Mammary epithelial cell (primary cell): ENCODE measurements at regions of chr6 and their contacts with region 1.

Region 1: DNA sequence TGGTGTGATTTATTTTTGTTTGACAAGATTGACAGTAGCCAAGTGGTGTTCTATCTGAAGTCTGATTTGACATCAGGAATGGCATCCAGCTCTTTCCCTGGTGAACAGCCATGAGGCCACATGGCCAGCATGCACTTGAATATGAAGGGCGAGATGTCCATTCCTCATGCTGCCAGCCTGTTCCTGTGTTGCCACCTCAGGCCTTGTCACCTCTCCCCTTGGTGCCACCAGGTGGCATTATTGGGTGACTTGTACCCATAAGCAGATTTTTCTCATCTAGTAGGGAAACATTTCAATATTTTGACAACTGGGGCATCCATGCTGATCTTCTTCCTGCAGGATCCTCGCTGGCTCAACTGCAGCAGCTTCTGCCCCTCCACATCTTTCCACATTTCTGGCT is 199.1 kb downstream of the ERMARD start:
- DNase-seq: peak; percentile 7
- H3K4me3 ChIP-seq: no peak overlapping the region
- H3K27ac ChIP-seq: no peak overlapping the region
- H3K4me1 ChIP-seq: no peaks in the 10 kb centered on the region
- H3K27me3 ChIP-seq: no peaks in the 10 kb centered on the region
- CTCF ChIP-seq: peak; percentile 31 to 58

Region 2: GRCh38 chr6:169880516-169880915 is 70.0 kb before region 1 on chr6:
- CTCF ChIA-PET with region 1: no interaction called
- dilution Hi-C with region 1: no loop called
- in situ Hi-C with region 1: no loop called
- intact Hi-C with region 1: no loop called
- DNase-seq: no peak
- H3K4me3 ChIP-seq: no peak overlapping the region
- H3K27ac ChIP-seq: no peak overlapping the region
- H3K4me1 ChIP-seq: no peaks in the 10 kb centered on the region
- H3K27me3 ChIP-seq: peaks cover 2% of the 10 kb centered on the region
- CTCF ChIP-seq: no peak

Region 3: DNA sequence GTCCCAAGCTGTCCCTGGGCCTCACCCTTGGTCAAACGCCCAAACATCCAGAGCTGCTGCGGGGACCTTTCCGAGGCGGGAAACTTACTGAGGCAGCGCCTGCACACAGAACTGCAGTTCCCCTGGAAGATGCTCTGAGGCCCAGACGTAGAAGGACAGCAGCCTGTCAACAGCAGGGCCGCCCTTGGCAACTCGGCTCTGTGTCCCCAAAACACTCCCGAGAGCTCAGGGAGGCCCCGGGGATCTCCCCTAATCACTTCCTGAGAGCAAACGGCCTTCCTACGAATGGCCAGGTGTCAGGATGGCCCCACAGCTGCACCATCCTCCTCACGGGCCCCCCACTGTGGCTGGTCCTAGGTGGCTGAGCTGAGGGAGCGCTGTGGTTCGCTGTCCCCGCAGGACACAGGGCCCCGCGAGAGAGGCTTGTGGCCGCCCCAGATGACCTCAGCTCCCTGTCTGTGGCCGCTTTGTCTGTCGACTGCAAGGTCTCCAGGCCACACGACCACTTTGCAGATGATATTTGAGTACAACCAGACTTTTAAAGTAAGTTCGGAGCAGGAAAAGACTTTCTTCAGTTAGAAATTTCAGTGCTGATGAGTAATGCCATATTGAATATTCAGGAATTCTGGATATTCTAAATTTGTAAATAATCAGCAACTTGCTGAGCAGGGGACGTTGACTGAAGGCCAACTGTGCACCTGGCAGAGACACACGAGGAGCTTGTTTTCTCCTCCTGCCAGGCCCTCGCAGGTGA is 294.3 kb after region 1 on chr6:
- CTCF ChIA-PET with region 1: no interaction called
- dilution Hi-C with region 1: no loop called
- in situ Hi-C with region 1: no loop called
- intact Hi-C with region 1: loop called (anchors 1 kb)
- DNase-seq: no peak
- H3K4me3 ChIP-seq: no peak overlapping the region
- H3K27ac ChIP-seq: no peak overlapping the region
- H3K4me1 ChIP-seq: no peaks in the 10 kb centered on the region
- H3K27me3 ChIP-seq: no peaks in the 10 kb centered on the region
- CTCF ChIP-seq: no peak

Region 4: DNA sequence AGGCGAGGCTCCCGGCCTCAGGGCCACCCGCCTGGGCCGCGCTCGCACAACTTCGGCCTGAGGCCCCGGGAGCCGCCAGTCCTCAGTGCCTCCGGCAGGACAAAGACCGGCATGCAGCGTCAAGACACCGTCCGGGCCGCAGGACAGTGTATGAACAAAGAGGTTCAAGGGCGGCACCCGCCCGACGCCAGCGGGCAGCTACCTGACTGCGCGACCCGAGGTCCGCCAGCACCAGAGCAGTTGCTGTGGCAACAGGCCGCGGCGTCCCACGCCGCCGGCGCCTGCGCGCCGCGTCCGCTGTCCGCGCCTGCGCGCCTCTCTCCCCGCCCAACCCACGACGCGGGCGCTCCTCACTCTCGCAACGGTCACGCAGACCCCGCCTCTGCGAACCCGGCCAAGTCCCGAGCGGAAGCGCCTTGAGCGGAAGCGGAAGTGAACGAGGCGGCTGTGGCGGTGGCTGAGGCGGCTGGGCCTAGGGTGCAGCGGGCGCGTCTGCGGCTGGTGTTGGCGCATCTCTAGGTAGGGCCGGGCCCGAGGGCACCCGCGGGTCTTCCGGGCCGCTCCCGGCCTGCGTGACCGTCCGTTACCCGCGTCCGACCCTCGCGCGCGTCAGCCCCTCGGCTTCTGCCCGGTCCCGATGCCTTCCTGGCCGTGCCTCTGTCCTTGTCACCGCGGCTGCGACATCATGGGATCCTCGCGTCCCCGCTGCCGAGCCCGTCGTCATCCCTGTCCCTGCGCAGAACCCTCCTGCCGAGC is 355.9 kb after region 1 on chr6 and contains the start of gene FAM120B:
- CTCF ChIA-PET with region 1: no interaction called
- dilution Hi-C with region 1: no loop called
- in situ Hi-C with region 1: no loop called
- intact Hi-C with region 1: loop called (anchors 5 kb)
- DNase-seq: peak; percentile 93
- H3K4me3 ChIP-seq: peak within 1 kb of the TSS; percentile 72 to 98 (median 98)
- H3K27ac ChIP-seq: peak within 1 kb of the TSS; percentile 78
- H3K4me1 ChIP-seq: peaks cover 22% of the 10 kb centered on the region
- H3K27me3 ChIP-seq: no peaks in the 10 kb centered on the region
- CTCF ChIP-seq: no peak
- total RNA-seq, gene FAM120B: 27.3 to 29.7 TPM